Activated CD4-positive, alpha-beta memory T cell treated with anti-CD3 and anti-CD28 coated beads, Interleukin-2, amount 10 ng/mL, durations not matched to agents 7 days and 5 days (primary cell): ENCODE measurements at regions of chr4 and their contacts with region 1.

Region 1: DNA sequence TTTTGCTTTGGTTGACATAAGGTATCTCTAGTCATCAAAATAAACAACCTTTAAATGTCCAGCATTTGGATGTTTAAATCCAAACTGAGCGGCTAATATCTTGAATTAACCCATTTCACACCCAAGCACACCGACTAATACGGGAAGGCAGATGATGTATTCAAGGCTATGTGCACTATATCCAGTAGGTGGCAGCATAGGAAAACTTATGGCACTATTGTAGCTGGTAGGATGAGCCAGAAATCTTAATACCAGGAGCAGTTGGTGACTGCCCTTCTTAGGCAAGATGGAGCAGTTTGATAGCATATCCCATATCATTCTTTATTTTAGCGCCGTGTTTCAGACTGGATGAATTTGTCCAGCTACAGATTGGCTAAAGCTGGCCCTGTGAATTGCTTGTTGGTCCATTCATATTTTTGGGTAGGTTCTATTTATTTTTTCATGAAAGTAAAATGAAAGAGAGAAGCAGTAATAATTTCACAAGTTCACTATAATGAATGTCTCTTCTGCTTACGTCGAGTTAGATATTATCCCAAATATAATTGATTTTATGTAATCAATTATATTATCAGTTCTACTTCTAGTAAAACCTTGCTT is 24.4 kb downstream of the UCHL1 start:
- DNase-seq: no peak
- H3K4me3 Mint-ChIP-seq: no peak overlapping the region
- H3K27ac Mint-ChIP-seq: no peak overlapping the region
- H3K4me1 Mint-ChIP-seq: no peaks in the 10 kb centered on the region
- H3K27me3 Mint-ChIP-seq: no peaks in the 10 kb centered on the region

Region 2: GRCh38 chr4:41044165-41044564 is 237.0 kb before region 1 on chr4:
- CTCF ChIA-PET with region 1: no interaction called
- POLR2A ChIA-PET with region 1: no interaction called
- DNase-seq: no peak
- H3K4me3 Mint-ChIP-seq: no peak overlapping the region
- H3K27ac Mint-ChIP-seq: no peak overlapping the region
- H3K4me1 Mint-ChIP-seq: no peaks in the 10 kb centered on the region
- H3K27me3 Mint-ChIP-seq: no peaks in the 10 kb centered on the region

Region 3: GRCh38 chr4:41346306-41347061 is 65.3 kb after region 1 on chr4:
- CTCF ChIA-PET with region 1: no interaction called
- POLR2A ChIA-PET with region 1: no interaction called
- DNase-seq: no peak
- H3K4me3 Mint-ChIP-seq: no peak overlapping the region
- H3K27ac Mint-ChIP-seq: no peak overlapping the region
- H3K4me1 Mint-ChIP-seq: no peaks in the 10 kb centered on the region
- H3K27me3 Mint-ChIP-seq: no peaks in the 10 kb centered on the region

Region 4: GRCh38 chr4:41661442-41662076 is 380.4 kb after region 1 on chr4:
- CTCF ChIA-PET with region 1: interaction called, 57 read pairs
- POLR2A ChIA-PET with region 1: no interaction called
- DNase-seq: peak; percentile 41
- H3K4me3 Mint-ChIP-seq: no peak overlapping the region
- H3K27ac Mint-ChIP-seq: no peak overlapping the region
- H3K4me1 Mint-ChIP-seq: no peaks in the 10 kb centered on the region
- H3K27me3 Mint-ChIP-seq: no peaks in the 10 kb centered on the region